Lower leg skin (tissue), 4 donors: ENCODE measurements at regions of chr17 and their contacts with region 1.

Region 1: GRCh38 chr17:43024407-43025289 is at the start of gene RND2:
- DNase-seq: peak; percentile 89 to 97
- H3K4me3 ChIP-seq: peak within 1 kb of the TSS; percentile 27
- CTCF ChIP-seq: peak in 1 of 3 donors; percentile 51
- POLR2A ChIP-seq: no peak
- total RNA-seq, gene RND2: 0.65 to 2.7 (median 1.0) TPM

Region 2: GRCh38 chr17:42891539-42892152 is 133.0 kb before region 1 on chr17:
- intact Hi-C with region 1: no loop called
- DNase-seq: peak; percentile 33 to 90
- H3K4me3 ChIP-seq: no peak overlapping the region
- CTCF ChIP-seq: no peak
- POLR2A ChIP-seq: no peak

Region 3: DNA sequence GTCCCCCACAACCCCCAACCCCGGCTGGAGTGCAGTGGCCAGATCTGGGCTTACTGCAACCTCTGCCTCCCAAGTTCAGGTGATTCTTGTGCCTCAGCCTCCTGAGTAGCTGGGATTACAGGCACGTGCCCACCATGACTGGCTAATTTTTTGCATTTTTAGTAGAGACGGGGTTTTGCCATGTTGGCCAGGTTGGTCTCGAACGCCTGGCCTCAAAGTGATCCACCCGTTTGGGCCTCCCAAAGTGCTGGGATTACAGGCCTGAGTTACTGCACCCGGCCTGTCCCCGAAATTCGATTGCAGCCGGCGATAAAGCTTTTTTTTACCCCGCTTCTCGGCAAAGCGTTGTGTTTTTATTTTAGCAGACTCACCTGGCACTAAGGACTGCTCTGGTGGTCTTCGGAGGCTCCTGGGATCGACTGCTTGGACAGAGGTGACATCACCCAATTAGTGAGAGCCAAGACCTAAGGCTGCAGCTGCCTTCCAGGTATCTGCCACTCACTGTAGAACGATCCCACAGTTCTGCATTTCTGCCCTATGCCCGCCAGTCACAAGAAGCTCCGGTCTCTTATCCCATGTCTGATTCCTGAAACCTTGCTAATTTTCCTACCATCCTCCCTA is 292.0 kb after region 1 on chr17:
- intact Hi-C with region 1: loop called (anchors 10 kb)
- DNase-seq: peak in 1 of 2 donors; percentile 72
- H3K4me3 ChIP-seq: no peak overlapping the region
- CTCF ChIP-seq: no peak
- POLR2A ChIP-seq: no peak

Region 4: GRCh38 chr17:44968226-44969143 is 1943.8 kb after region 1 on chr17 and contains the start of gene C1QL1:
- intact Hi-C with region 1: no loop called
- DNase-seq: peak; percentile 78 to 97
- H3K4me3 ChIP-seq: peak within 1 kb of the TSS; percentile 13
- CTCF ChIP-seq: no peak
- POLR2A ChIP-seq: no peak
- total RNA-seq, gene C1QL1: 0.21 to 1.4 (median 0.73) TPM